Panc1 (cell line): ENCODE measurements at regions of chr12 and their contacts with region 1.

Region 1: GRCh38 chr12:75480469-75480949 is at the start of gene GLIPR1:
- DNase-seq: peak; percentile 69
- ATAC-seq: peak; percentile 85
- H3K4me3 ChIP-seq: peak within 1 kb of the TSS; percentile 45 to 70
- H3K27ac ChIP-seq: peak within 1 kb of the TSS; percentile 90
- H3K4me1 ChIP-seq: peaks cover 23% of the 10 kb centered on the region
- H3K27me3 ChIP-seq: no peaks in the 10 kb centered on the region
- CTCF ChIP-seq: no peak
- total RNA-seq, gene GLIPR1: 11.5 TPM

Region 2: GRCh38 chr12:74689929-74690328 is 790.6 kb before region 1 on chr12:
- CTCF ChIA-PET with region 1: no interaction called
- POLR2A ChIA-PET with region 1: no interaction called
- in situ Hi-C with region 1: no loop called
- intact Hi-C with region 1: loop called (anchors 10 kb)
- DNase-seq: no peak
- ATAC-seq: no peak
- H3K4me3 ChIP-seq: no peak overlapping the region
- H3K27ac ChIP-seq: 0 out of 2 replicates have a peak overlapping the region, but pooled peaks have one; percentile 54
- H3K4me1 ChIP-seq: no peaks in the 10 kb centered on the region; the same call in 1 of the 2 replicates
- H3K27me3 ChIP-seq: no peaks in the 10 kb centered on the region
- CTCF ChIP-seq: no peak

Region 3: GRCh38 chr12:75225546-75225945 is 255.0 kb before region 1 on chr12:
- CTCF ChIA-PET with region 1: no interaction called
- POLR2A ChIA-PET with region 1: no interaction called
- in situ Hi-C with region 1: no loop called
- intact Hi-C with region 1: no loop called
- DNase-seq: no peak
- ATAC-seq: no peak
- H3K4me3 ChIP-seq: no peak overlapping the region
- H3K27ac ChIP-seq: no peak overlapping the region
- H3K4me1 ChIP-seq: no peaks in the 10 kb centered on the region
- H3K27me3 ChIP-seq: no peaks in the 10 kb centered on the region
- CTCF ChIP-seq: no peak

Region 4: DNA sequence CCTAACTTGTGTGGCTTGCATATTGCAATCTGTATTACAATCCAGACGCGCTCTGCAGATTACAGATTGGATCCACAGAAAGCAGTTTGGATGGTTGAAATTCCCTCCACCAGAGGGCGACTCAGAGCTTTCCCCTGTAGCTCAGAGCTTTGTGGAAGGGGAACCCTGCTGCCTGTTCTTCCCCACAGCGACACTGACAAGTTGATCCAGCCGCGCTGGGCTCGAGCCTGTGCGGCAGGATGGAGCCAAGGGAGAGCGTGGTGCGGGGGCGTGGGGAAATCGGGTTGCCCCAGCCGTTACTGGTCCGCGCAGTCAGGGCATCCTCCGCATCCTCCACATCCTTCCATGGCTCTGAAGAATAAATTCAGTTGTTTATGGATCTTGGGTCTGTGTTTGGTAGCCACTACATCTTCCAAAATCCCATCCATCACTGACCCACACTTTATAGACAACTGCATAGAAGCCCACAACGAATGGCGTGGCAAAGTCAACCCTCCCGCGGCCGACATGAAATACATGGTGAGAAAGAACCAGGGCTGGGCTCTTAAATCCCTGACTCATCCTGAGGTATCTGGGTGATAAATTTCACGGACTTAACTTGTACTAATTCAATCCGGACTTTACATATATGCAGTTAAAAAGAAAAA is 146.0 kb before region 1 on chr12 and contains the start of gene GLIPR1L1:
- CTCF ChIA-PET with region 1: no interaction called
- POLR2A ChIA-PET with region 1: no interaction called
- in situ Hi-C with region 1: no loop called
- intact Hi-C with region 1: loop called (anchors 10 kb)
- DNase-seq: peak; percentile 66
- ATAC-seq: peak; percentile 79
- H3K4me3 ChIP-seq: peak within 1 kb of the TSS; percentile 41 to 51
- H3K27ac ChIP-seq: peak within 1 kb of the TSS; percentile 49
- H3K4me1 ChIP-seq: peaks cover 2% of the 10 kb centered on the region; the same call in 1 of the 2 replicates
- H3K27me3 ChIP-seq: no peaks in the 10 kb centered on the region
- CTCF ChIP-seq: peak; percentile 81
- total RNA-seq, gene GLIPR1L1: not detected

Region 5: GRCh38 chr12:75390899-75391538 is 89.5 kb before region 1 on chr12 and contains the start of gene GLIPR1L2:
- CTCF ChIA-PET with region 1: interaction called, 12 read pairs
- POLR2A ChIA-PET with region 1: no interaction called
- in situ Hi-C with region 1: no loop called
- intact Hi-C with region 1: loop called (anchors 5 kb)
- DNase-seq: peak; percentile 94
- ATAC-seq: peak; percentile 99
- H3K4me3 ChIP-seq: peak within 1 kb of the TSS; percentile 55 to 73
- H3K27ac ChIP-seq: peak within 1 kb of the TSS; percentile 98
- H3K4me1 ChIP-seq: peaks cover 20% of the 10 kb centered on the region
- H3K27me3 ChIP-seq: no peaks in the 10 kb centered on the region
- CTCF ChIP-seq: peak; percentile 94
- total RNA-seq, gene GLIPR1L2: 0.72 TPM